MCF 10A (cell line): ENCODE measurements at regions of chr7 and their contacts with region 1.

Region 1: GRCh38 chr7:130242198-130243014 is 24.3 kb upstream of the CPA2 start:
- DNase-seq: peak; percentile 68
- H3K4me3 Mint-ChIP-seq: no peak overlapping the region
- H3K27ac Mint-ChIP-seq: no peak overlapping the region
- H3K4me1 Mint-ChIP-seq: peaks cover 12% of the 10 kb centered on the region
- H3K27me3 Mint-ChIP-seq: no peaks in the 10 kb centered on the region
- CTCF ChIP-seq: peak; percentile 96

Region 2: DNA sequence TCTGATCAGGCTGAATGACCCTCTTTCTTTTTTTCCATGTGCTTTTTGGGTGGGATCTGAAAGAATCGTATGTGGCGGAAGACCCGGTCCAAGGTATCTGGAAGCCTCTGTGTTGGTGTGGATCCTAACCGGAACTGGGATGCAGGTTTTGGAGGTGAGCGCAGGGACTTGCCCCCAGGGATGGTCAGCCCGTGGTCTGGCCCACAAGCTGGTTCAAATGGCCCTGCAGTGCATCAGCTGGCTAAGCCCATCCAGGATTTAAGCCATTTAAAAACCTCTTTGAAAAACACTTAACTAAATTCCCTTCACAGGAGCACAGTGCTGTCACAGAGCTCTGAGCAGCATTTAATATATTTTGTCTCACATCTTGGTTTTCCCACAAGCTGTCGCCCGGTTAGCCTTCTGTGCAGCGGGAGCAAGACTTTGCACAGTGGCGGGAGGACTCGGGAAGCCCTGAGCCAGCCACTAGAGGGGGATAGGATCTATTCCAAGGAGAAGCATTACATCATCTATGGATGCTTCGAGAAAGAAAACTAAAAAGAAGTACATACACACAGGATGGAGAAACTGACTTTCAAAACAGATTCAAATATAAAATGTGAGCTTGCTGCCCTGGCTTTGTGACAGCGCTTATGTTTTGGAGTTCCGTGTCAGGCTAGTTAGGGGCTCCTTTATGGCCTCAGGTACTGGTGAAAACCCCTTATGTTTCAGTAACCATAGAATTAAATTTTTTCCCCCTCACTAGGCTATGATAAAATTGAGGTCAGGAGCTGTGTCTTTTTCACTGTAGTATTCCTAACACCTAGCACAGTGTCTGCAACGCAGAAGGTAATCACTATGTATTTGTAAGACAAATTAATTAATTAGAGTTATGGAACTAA is 35.6 kb after region 1 on chr7:
- CTCF ChIA-PET with region 1: no interaction called
- POLR2A ChIA-PET with region 1: no interaction called
- intact Hi-C with region 1: no loop called
- DNase-seq: peak; percentile 55
- H3K4me3 Mint-ChIP-seq: no peak overlapping the region
- H3K27ac Mint-ChIP-seq: no peak overlapping the region
- H3K4me1 Mint-ChIP-seq: peaks cover 52% of the 10 kb centered on the region
- H3K27me3 Mint-ChIP-seq: no peaks in the 10 kb centered on the region
- CTCF ChIP-seq: no peak

Region 3: DNA sequence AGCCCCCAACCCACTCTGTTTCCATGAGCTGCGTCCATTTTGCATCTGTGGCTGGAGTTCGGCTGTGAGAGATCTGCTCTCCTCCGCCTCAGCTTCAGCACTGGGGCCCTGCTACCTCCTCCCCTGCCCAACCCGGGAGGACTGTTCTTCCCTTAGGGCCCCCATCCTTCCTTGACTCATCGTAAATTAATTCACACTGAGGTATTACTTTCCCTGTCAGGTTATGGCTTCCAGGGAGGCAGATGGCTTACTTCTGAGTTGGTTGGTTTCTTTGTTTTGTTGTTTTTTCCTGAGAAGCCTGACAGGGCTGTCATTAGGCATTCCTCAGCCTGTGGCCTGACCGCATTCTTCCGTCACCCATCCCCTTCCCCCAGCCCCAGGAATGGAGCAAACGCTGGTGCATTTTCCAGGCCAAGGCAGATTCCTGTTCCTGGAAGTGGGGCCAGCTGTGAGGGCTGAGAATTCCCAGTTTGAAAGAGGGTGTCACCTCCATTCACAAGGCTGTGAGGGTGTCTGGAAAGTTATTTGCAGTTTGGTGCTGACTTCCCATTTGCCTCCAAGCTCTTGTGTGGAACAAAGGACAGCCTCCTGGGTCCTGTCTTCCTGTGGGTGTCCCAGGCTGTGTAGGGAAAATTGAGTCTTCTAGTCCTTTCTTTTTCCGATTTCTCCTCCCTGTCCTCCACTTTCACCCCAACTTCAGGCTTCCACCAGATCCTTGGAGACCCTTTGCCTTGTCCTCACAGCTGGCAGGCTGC is 113.9 kb after region 1 on chr7:
- CTCF ChIA-PET with region 1: no interaction called
- POLR2A ChIA-PET with region 1: no interaction called
- intact Hi-C with region 1: loop called (anchors 5 kb)
- DNase-seq: peak; percentile 95
- H3K4me3 Mint-ChIP-seq: peak overlapping the region; percentile 50
- H3K27ac Mint-ChIP-seq: peak overlapping the region; percentile 68
- H3K4me1 Mint-ChIP-seq: peaks cover 53% of the 10 kb centered on the region
- H3K27me3 Mint-ChIP-seq: no peaks in the 10 kb centered on the region
- CTCF ChIP-seq: no peak

Region 4: DNA sequence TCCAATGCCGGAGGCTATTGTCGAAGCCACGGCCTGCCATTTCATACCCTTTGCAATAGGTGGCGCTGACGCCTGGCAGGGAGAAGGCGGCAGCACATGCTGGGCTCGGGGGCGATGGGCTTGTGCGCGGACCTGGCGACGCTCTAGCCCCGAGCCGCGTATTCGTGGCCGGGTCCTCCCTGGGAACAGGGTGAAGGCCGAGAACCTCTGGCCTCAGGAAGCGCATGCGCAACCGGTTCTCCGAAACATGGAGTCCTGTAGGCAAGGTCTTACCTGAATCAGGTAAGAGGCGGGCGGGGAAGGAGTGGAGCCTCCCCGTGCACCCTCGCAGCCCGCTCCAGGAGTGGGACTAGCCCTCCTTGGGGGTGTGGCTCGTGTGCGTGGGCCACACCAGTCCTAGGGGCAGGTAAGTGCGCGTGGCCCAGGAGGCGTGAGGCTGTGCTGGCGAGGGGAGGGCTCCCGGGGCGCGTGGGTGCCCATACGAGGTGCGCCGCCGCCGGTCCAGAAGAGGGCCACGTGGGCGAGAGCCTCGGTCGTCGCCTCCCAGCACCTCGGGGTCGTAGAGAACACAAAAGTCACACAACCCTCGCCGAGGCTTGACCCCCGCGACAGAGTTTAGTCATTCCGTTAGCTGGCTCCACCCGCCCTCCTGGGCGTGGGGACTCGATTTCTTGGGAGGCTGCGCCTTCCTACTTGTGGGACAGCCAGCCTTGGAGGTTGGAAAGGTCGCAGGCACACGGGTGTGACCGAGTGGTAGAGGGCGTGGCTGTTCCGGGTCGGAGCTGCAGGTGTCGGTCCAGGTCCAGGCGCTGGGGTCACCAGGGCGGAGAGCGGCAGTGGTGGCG is 243.9 kb after region 1 on chr7:
- CTCF ChIA-PET with region 1: no interaction called
- POLR2A ChIA-PET with region 1: no interaction called
- intact Hi-C with region 1: loop called (anchors 1 kb)
- DNase-seq: peak; percentile 89
- H3K4me3 Mint-ChIP-seq: peak overlapping the region; percentile 93
- H3K27ac Mint-ChIP-seq: peak overlapping the region; percentile 91
- H3K4me1 Mint-ChIP-seq: peaks cover 33% of the 10 kb centered on the region
- H3K27me3 Mint-ChIP-seq: no peaks in the 10 kb centered on the region
- CTCF ChIP-seq: peak; percentile 83

Region 5: GRCh38 chr7:130560970-130561369 is 318.6 kb after region 1 on chr7:
- CTCF ChIA-PET with region 1: interaction called, 6 read pairs
- POLR2A ChIA-PET with region 1: interaction called, 3 read pairs
- intact Hi-C with region 1: loop called (anchors 1 kb)
- DNase-seq: peak; percentile 59
- H3K4me3 Mint-ChIP-seq: no peak overlapping the region
- H3K27ac Mint-ChIP-seq: no peak overlapping the region
- H3K4me1 Mint-ChIP-seq: no peaks in the 10 kb centered on the region
- H3K27me3 Mint-ChIP-seq: no peaks in the 10 kb centered on the region
- CTCF ChIP-seq: peak; percentile 22

Region 6: GRCh38 chr7:130695840-130696239 is 453.4 kb after region 1 on chr7:
- CTCF ChIA-PET with region 1: no interaction called
- POLR2A ChIA-PET with region 1: no interaction called
- intact Hi-C with region 1: loop called (anchors 1 kb)
- DNase-seq: peak; percentile 55
- H3K4me3 Mint-ChIP-seq: no peak overlapping the region
- H3K27ac Mint-ChIP-seq: no peak overlapping the region
- H3K4me1 Mint-ChIP-seq: no peaks in the 10 kb centered on the region
- H3K27me3 Mint-ChIP-seq: no peaks in the 10 kb centered on the region
- CTCF ChIP-seq: peak; percentile 66

Region 7: GRCh38 chr7:130721486-130722280 is 479.3 kb after region 1 on chr7:
- CTCF ChIA-PET with region 1: no interaction called
- POLR2A ChIA-PET with region 1: no interaction called
- intact Hi-C with region 1: loop called (anchors 1 kb)
- DNase-seq: peak; percentile 62
- H3K4me3 Mint-ChIP-seq: no peak overlapping the region
- H3K27ac Mint-ChIP-seq: no peak overlapping the region
- H3K4me1 Mint-ChIP-seq: no peaks in the 10 kb centered on the region
- H3K27me3 Mint-ChIP-seq: peaks cover 18% of the 10 kb centered on the region
- CTCF ChIP-seq: peak; percentile 58

Region 8: DNA sequence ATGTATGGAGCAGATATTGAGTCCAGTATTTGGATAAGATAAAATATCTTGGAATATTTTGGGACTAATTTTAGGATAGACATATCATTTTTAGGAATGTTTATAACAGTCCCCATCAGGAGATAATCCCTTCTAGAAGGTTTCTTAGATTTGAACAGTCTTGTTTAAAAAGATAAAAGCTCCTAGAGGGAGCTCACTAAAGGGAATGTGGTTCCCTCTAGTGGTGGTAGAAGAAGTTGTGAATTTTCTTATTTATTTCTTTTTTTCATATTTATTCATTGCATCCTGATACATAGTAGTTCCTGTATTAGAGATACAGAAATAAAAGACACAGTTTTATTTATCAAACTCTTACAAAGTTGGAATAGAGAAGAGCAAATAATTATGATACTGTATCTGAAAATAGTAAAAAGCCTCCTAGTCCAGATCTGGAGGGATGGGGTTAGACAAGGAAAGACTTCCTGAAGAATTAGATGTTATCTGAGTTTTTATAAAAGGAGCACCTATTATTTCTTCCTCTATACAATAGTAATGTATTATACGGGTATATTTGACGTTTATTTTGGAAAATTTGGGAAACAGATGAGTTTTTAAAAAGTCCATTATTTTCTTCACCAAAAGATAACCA is 516.1 kb after region 1 on chr7:
- CTCF ChIA-PET with region 1: interaction called, 5 read pairs
- POLR2A ChIA-PET with region 1: no interaction called
- intact Hi-C with region 1: loop called (anchors 1 kb)
- DNase-seq: peak; percentile 57
- H3K4me3 Mint-ChIP-seq: no peak overlapping the region
- H3K27ac Mint-ChIP-seq: no peak overlapping the region
- H3K4me1 Mint-ChIP-seq: peaks cover 5% of the 10 kb centered on the region
- H3K27me3 Mint-ChIP-seq: peaks cover 35% of the 10 kb centered on the region
- CTCF ChIP-seq: peak; percentile 64